PC-9 (cell line): ENCODE measurements at regions of chr4 and their contacts with region 1.

Region 1: DNA sequence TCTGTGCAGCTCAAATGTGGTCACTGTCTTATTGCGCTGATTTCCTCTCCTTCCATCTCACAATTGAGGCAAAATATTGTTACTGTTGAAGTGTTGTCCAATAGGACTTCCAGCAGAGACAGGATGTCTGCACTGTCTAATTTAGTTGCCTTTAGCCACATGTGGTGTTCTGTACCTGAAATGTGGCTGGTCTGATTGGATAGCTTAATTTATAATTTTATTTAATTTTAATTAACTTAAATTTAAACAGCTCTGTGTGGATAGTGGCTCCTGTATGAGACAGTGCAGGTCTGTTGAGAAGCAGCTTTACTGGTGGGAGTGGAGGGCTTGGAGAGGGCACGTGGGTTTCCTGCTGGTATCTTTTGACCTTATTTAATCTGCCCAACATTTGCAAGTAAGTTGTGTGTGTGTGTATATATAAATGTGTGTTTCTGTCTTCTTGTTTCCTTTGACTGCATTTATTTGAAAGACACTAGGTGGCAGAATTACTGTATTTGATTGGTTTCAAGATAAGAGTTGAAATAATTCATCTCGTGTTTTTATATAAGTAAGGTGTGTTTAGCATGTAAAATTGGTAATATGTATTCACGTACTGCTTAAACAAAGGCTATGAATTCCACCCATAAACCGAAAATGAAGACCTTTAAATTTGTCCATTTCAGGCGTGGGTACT is 55.3 kb upstream of the MSANTD1 start:
- DNase-seq: no peak
- H3K4me3 ChIP-seq: no peak overlapping the region
- H3K27ac ChIP-seq: no peak overlapping the region
- H3K4me1 ChIP-seq: no peaks in the 10 kb centered on the region
- H3K27me3 ChIP-seq: no peaks in the 10 kb centered on the region
- CTCF ChIP-seq: peak; percentile 50; the same call in 1 of the 2 replicates

Region 2: DNA sequence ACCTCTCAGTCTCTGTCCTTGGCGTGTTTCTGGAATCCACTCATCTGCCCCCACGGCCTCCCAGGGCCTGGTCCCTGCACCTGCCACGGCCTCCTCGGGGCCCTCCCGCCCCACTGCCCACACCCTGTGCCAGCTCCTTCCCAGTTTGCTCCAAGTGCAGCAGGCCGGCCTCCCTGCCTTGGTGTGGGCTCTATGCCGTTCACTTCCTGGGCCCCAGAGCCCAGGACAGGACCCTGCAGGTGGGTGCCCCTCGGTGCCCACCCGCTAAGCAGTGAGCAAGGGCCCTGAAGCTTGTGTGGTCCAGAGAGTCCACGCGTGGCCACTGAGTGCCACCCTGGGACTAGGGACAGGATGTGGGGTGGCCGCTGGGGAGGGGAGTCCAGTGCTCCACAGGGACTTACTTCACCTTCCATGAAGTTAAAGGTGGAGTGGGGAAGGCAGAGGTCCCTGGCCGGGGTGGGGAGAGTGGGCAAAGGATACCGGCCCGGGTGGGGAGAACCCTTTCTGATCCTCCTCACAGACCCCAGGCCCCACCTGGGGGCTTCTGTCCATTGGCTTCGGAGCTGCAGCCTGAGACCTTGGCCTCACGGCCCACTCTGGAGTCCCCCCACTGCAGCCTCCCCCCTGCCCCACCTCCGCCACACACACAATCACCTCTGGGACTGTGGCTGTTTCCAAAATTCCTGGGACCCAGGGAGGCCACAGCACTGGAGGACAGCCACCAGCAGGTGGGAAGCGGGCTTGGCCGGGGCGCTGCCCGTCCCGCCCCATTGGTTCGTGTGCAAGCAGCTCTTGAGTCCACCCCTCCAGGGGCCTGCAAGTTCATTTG is 1727.4 kb before region 1 on chr4:
- CTCF ChIA-PET with region 1: interaction called, 22 read pairs
- POLR2A ChIA-PET with region 1: no interaction called
- intact Hi-C with region 1: no loop called
- DNase-seq: no peak
- H3K4me3 ChIP-seq: no peak overlapping the region
- H3K27ac ChIP-seq: no peak overlapping the region
- H3K4me1 ChIP-seq: no peaks in the 10 kb centered on the region
- H3K27me3 ChIP-seq: peaks cover 81% of the 10 kb centered on the region
- CTCF ChIP-seq: no peak